ENCODE measurements at regions of chr6 and their contacts with region 1.

Region 1: GRCh38 chr6:142146828-142147662 is at the starts of genes NMBR and VTA1:
- DNase-seq: peak; percentile 100
- ATAC-seq: peak; percentile 100
- H3K4me3 ChIP-seq: peak within 1 kb of the TSS; percentile 79 to 91 (median 81)
- H3K27ac ChIP-seq: peak within 1 kb of the TSS; percentile 63
- H3K4me1 ChIP-seq: peaks cover 30% of the 10 kb centered on the region
- H3K27me3 ChIP-seq: no peaks in the 10 kb centered on the region; a peak in 1 of 5 replicates
- CTCF ChIP-seq: peak; percentile 99
- EP300 ChIP-seq: peak in 1 of 2 experiments; percentile 62; a peak in 2 of 4 replicates
- POLR2A ChIP-seq: peak; percentile 97 to 98
- RAD21 ChIP-seq: peak; percentile 93
- total RNA-seq, gene NMBR: not detected in 2 replicates
- total RNA-seq, gene VTA1: 89.1 and 143 TPM in 2 replicates

Region 2: GRCh38 chr6:142275251-142276006 is 128.4 kb after region 1 on chr6:
- CTCF ChIA-PET with region 1: no interaction called
- POLR2A ChIA-PET with region 1: no interaction called
- in situ Hi-C with region 1: no loop called
- intact Hi-C with region 1: no loop called
- DNase-seq: no peak
- ATAC-seq: no peak
- H3K4me3 ChIP-seq: no peak overlapping the region
- H3K27ac ChIP-seq: no peak overlapping the region
- H3K4me1 ChIP-seq: peaks cover 28% of the 10 kb centered on the region
- H3K27me3 ChIP-seq: no peaks in the 10 kb centered on the region
- CTCF ChIP-seq: no peak
- EP300 ChIP-seq: no peak
- POLR2A ChIP-seq: no peak
- RAD21 ChIP-seq: no peak

Region 3: DNA sequence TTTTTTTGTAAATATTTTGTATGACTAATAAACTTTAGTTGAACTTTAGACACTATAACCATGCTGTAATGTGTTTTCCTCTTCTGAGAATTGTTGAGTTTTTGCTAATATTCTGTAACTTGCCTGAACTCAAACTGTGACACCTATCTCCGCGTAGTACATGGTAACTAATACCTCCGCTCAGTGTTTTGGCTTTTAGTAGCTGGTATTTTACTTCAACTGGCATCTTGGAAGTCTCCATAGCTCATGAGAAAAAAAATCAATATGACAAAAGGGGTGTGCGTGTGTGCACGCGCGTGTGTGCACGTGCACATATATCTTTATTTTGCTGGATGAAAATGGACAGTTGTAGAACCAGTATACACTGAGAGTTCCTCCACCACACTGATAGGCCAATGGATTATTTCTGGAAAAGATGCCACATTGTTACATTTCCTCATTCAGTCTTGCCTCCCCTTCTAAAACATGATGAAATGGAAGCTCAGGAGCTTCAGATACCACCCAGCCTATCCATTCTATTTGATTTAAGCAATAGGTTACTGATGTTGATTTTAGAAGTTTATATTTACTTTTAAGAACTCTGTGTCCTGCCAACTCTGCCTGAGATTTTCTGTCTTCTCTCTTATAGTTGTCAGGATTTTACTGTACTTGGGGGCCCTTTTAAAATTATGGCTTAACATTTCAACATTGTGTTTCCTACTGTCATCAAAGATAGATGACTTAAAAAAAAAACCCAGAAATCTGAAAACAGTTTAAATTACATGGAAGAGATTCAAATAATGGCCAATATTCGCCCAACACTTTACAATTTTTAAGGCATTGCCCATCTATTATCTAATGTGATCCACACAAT is 138.4 kb after region 1 on chr6:
- CTCF ChIA-PET with region 1: no interaction called
- POLR2A ChIA-PET with region 1: interaction called, 10 read pairs
- in situ Hi-C with region 1: no loop called
- intact Hi-C with region 1: no loop called
- DNase-seq: peak; percentile 91
- ATAC-seq: peak; percentile 99
- H3K4me3 ChIP-seq: peak overlapping the region in 2 of 3 experiments; percentile 27 to 55; a peak in 3 of 6 replicates
- H3K27ac ChIP-seq: peak overlapping the region; percentile 84
- H3K4me1 ChIP-seq: peaks cover 43% of the 10 kb centered on the region
- H3K27me3 ChIP-seq: no peaks in the 10 kb centered on the region
- CTCF ChIP-seq: no peak
- EP300 ChIP-seq: peak in 1 of 2 experiments; percentile 88; a peak in 2 of 4 replicates
- POLR2A ChIP-seq: no peak
- RAD21 ChIP-seq: peak; percentile 41; the same call in 1 of the 2 replicates

Region 4: DNA sequence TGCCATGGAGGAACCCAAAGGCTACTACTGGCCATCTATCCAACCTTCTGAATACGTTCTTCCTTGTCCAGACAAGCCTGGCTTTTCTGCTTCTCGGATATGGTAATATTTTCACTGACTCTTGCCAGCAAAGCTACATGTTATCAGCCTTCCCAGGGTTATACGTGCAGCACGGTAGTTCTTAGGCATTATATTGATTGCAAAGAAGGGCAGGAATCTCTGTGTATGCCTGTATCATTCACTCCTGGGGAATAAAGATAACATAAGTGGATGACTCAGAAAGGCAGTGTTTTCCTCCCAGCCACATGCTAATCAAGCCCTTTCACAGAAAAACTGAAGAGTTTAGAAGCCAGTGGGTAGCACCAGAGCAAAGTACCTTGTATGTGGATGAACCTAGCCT is 253.4 kb after region 1 on chr6:
- CTCF ChIA-PET with region 1: no interaction called
- POLR2A ChIA-PET with region 1: no interaction called
- in situ Hi-C with region 1: no loop called
- intact Hi-C with region 1: loop called (anchors 5 kb)
- DNase-seq: no peak
- ATAC-seq: no peak
- H3K4me3 ChIP-seq: no peak overlapping the region
- H3K27ac ChIP-seq: no peak overlapping the region
- H3K4me1 ChIP-seq: peaks cover 21% of the 10 kb centered on the region
- H3K27me3 ChIP-seq: no peaks in the 10 kb centered on the region
- CTCF ChIP-seq: no peak
- EP300 ChIP-seq: no peak
- POLR2A ChIP-seq: no peak
- RAD21 ChIP-seq: no peak